ENCODE measurements at regions of chrX and their contacts with region 1.

Region 1: DNA sequence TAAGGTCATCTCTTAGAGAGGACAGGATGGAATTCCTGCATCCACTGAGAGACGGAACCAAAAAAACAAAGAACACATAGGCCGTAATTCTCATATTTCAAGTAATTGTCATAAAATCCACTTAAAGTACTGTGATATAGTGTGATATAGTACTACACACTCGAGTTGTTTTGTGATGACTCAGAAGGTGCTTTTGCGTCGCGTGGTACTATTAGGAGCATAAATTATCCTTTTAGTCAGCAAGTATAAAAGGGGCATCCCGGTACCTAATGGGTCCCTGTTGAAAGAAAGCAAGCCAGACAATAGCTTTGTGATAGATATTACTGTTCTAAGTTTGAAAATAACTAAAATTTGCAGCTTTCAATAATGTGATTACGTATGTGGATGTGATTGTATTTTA is 55.3 kb downstream of the GPR143 start:
- DNase-seq: no peak
- H3K4me3 ChIP-seq: no peak overlapping the region
- H3K27ac ChIP-seq: no peak overlapping the region
- H3K4me1 ChIP-seq: peaks cover 0 to 7% (median 0%) of the 10 kb centered on the region in 4 donors
- H3K27me3 ChIP-seq: no peaks in the 10 kb centered on the region
- CTCF ChIP-seq: no peak
- EP300 ChIP-seq: no peak
- POLR2A ChIP-seq: no peak

Region 2: GRCh38 chrX:8748855-8749254 is 961.5 kb before region 1 on chrX:
- intact Hi-C with region 1: loop called (anchors 5 kb)
- DNase-seq: no peak
- H3K4me3 ChIP-seq: no peak overlapping the region
- H3K27ac ChIP-seq: no peak overlapping the region
- H3K4me1 ChIP-seq: no peaks in the 10 kb centered on the region
- H3K27me3 ChIP-seq: no peaks in the 10 kb centered on the region
- CTCF ChIP-seq: peak; percentile 33 to 62 (median 45)
- EP300 ChIP-seq: no peak
- POLR2A ChIP-seq: no peak

Region 3: DNA sequence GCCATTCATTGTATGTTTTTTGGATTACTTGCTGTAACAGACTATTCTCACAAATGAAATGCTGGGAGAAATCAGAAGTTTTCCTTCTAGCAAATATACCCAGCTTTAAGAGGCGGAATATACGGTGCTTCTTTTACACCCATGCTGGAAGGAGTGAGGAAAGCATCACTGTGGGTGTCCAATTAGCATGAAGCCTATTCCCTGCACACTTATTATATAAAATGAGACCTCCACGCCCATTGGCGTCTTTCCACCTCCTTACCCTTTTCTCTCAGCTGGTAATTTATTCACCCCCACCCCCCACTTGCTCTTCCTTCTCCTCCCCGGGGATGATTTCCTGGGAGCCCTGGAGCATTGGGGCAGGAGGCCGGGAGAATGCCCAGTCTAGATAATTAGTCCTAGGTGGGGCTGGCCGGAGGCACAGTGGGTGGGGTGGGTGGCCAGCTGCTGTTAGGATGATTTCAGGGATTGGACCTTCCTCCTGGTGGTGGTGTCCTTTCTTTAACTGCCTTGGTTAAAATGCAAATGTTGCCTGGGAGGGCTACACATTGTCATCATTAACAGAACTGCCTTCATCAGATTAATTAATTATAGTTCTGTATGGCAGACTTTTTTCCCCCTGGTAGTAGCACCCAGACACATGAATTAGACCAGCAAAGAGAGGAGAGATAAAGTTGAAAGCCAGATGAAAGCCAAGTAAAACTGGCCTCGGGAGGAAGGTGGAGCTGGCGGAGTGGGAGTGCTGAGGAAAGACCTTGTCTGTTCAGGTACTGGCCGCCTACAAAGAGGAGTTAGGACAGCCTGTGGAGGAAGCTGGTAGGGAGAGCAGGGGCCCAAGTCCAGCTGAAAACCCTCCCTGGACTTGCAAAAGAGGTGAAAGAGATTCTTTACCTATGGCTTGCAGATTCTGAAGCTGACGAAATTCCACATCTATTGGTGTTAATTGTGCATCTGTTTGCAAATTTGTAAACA is 87.3 kb after region 1 on chrX:
- intact Hi-C with region 1: no loop called
- DNase-seq: no peak
- H3K4me3 ChIP-seq: no peak overlapping the region
- H3K27ac ChIP-seq: no peak overlapping the region
- H3K4me1 ChIP-seq: no peaks in the 10 kb centered on the region
- H3K27me3 ChIP-seq: no peaks in the 10 kb centered on the region
- CTCF ChIP-seq: no peak
- EP300 ChIP-seq: no peak
- POLR2A ChIP-seq: no peak

Region 4: DNA sequence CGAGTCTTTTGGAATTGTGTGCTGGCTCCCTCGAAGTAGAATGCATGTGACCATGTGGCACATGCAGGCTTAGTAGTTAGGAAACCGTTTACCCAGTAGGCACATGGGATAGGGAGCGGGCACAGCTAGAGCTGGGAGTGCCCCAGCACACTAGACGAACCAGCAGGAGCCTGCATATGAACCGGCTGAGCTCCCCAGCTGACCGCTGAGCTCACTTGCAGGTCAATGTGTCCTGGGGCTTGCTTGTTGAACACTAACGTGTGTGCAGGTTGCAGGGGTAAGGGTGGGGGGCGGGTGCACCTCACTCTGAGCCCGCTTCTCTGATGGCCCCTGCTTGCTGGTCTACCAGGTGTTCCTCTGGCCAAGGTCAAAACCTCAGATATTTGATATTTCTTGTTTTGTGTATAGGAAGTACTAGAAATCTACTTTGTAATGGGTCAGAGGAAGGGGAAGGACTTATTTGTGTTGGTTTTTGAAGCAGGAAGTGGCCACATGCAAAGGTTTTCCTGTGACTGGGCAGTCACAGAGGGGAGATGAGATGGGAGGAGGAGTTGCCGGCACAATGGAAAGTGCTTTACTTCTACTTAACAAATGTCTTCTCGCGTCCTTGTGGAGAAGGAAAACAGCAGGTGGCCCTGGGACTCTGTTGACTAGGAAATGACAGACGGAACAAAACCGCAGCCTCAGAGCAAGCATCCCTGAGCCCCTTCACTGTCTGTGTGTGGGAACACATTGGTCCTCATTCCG is 122.3 kb after region 1 on chrX:
- intact Hi-C with region 1: no loop called
- DNase-seq: no peak
- H3K4me3 ChIP-seq: no peak overlapping the region
- H3K27ac ChIP-seq: no peak overlapping the region
- H3K4me1 ChIP-seq: peaks cover 0 to 4% (median 0%) of the 10 kb centered on the region in 4 donors
- H3K27me3 ChIP-seq: no peaks in the 10 kb centered on the region
- CTCF ChIP-seq: no peak
- EP300 ChIP-seq: no peak
- POLR2A ChIP-seq: no peak